ENCODE measurements at regions of chr1 and their contacts with region 1.

Region 1: GRCh38 chr1:171313835-171314320 is at the start of gene FMO4:
- DNase-seq: peak; percentile 100
- H3K4me3 Mint-ChIP-seq: peak within 1 kb of the TSS; percentile 64
- H3K27ac Mint-ChIP-seq: peak within 1 kb of the TSS; percentile 79
- H3K4me1 Mint-ChIP-seq: peaks cover 6% of the 10 kb centered on the region
- H3K27me3 Mint-ChIP-seq: no peaks in the 10 kb centered on the region
- CTCF ChIP-seq: peak; percentile 85
- total RNA-seq, gene FMO4: 0.63 and 1.5 TPM in 2 replicates

Region 2: DNA sequence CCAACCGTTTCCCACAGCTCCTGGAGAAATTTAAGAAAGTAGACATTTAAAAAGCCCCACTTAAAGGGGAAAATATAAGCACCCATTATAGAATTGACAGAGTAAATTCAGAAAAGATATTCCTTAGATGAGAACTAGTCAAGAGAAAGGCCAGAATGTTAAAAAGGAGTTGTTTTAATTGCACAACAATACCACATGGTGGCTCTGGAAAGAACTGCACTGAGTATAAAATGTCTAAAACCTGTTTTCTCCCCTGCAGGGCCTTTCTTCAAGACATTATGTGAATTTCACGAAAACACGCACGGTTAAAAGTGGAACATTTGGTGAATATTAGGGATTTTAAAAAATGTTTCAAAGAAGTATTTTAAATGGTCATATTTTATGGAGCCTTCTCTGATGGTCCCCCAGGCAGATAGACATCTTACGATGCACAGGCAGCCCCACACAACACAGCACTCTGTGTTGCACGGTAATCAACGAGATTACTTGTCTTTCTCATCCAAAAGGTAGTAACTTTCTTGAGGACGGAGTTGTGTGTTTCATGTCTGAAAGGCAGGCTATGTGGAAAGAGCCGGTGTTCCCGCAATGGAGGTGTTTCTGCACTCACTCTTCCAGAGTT is 548.1 kb before region 1 on chr1:
- CTCF ChIA-PET with region 1: no interaction called
- POLR2A ChIA-PET with region 1: no interaction called
- intact Hi-C with region 1: no loop called
- DNase-seq: peak; percentile 54
- H3K4me3 Mint-ChIP-seq: no peak overlapping the region
- H3K27ac Mint-ChIP-seq: no peak overlapping the region
- H3K4me1 Mint-ChIP-seq: no peaks in the 10 kb centered on the region
- H3K27me3 Mint-ChIP-seq: no peaks in the 10 kb centered on the region
- CTCF ChIP-seq: peak; percentile 74

Region 3: GRCh38 chr1:171090604-171091003 is 223.3 kb before region 1 on chr1 and contains the start of gene FMO3:
- CTCF ChIA-PET with region 1: interaction called, 12 read pairs
- POLR2A ChIA-PET with region 1: no interaction called
- intact Hi-C with region 1: no loop called
- DNase-seq: no peak
- H3K4me3 Mint-ChIP-seq: no peak within 1 kb of the TSS
- H3K27ac Mint-ChIP-seq: no peak within 1 kb of the TSS
- H3K4me1 Mint-ChIP-seq: no peaks in the 10 kb centered on the region
- H3K27me3 Mint-ChIP-seq: no peaks in the 10 kb centered on the region
- CTCF ChIP-seq: no peak
- total RNA-seq, gene FMO3: not detected in 2 replicates

Region 4: GRCh38 chr1:171220581-171221054 is 93.3 kb before region 1 on chr1:
- CTCF ChIA-PET with region 1: interaction called, 110 read pairs
- POLR2A ChIA-PET with region 1: interaction called, 4 read pairs
- intact Hi-C with region 1: no loop called
- DNase-seq: no peak
- H3K4me3 Mint-ChIP-seq: peak overlapping the region; percentile 70
- H3K27ac Mint-ChIP-seq: peak overlapping the region; percentile 98
- H3K4me1 Mint-ChIP-seq: peaks cover 61% of the 10 kb centered on the region
- H3K27me3 Mint-ChIP-seq: no peaks in the 10 kb centered on the region
- CTCF ChIP-seq: no peak

Region 5: GRCh38 chr1:171267391-171267790 is 46.5 kb before region 1 on chr1:
- CTCF ChIA-PET with region 1: interaction called, 19 read pairs
- POLR2A ChIA-PET with region 1: no interaction called
- intact Hi-C with region 1: no loop called
- DNase-seq: no peak
- H3K4me3 Mint-ChIP-seq: no peak overlapping the region
- H3K27ac Mint-ChIP-seq: no peak overlapping the region
- H3K4me1 Mint-ChIP-seq: peaks cover 8% of the 10 kb centered on the region
- H3K27me3 Mint-ChIP-seq: no peaks in the 10 kb centered on the region
- CTCF ChIP-seq: no peak

Region 6: DNA sequence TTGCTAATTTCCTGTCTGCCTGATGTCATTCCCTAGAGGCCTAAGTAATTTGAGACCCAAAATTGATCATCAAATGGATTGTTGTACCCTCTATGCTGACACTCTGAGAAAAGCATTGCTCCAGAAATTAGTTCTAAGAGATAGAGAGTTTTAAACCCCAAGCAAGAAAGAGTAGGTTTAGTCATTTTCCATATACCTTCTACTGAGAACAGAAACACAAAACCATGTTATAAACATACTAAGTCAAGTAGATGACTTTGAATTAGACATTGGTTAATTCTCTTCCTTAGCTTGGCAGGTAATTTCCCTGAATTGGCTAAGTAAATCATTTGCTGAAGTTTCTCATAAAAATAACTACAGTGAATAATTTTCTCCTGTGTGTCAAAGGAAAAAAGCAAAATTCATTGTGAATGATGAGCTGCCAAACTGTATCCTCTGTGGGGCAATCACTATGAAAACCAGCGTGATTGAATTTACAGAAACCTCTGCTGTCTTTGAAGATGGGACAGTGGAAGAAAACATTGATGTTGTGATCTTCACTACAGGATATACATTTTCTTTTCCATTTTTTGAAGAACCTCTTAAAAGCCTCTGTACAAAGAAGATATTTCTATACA is 20.3 kb after region 1 on chr1:
- CTCF ChIA-PET with region 1: interaction called, 31 read pairs
- POLR2A ChIA-PET with region 1: interaction called, 9 read pairs
- intact Hi-C with region 1: no loop called
- DNase-seq: no peak
- H3K4me3 Mint-ChIP-seq: no peak overlapping the region
- H3K27ac Mint-ChIP-seq: no peak overlapping the region
- H3K4me1 Mint-ChIP-seq: no peaks in the 10 kb centered on the region
- H3K27me3 Mint-ChIP-seq: no peaks in the 10 kb centered on the region
- CTCF ChIP-seq: no peak

Region 7: GRCh38 chr1:171485375-171486047 is 171.6 kb after region 1 on chr1 and contains the start of gene PRRC2C:
- CTCF ChIA-PET with region 1: interaction called, 14 read pairs
- POLR2A ChIA-PET with region 1: interaction called, 21 read pairs
- intact Hi-C with region 1: loop called (anchors 1 kb)
- DNase-seq: peak; percentile 100
- H3K4me3 Mint-ChIP-seq: peak within 1 kb of the TSS; percentile 80
- H3K27ac Mint-ChIP-seq: peak within 1 kb of the TSS; percentile 92
- H3K4me1 Mint-ChIP-seq: peaks cover 38% of the 10 kb centered on the region
- H3K27me3 Mint-ChIP-seq: no peaks in the 10 kb centered on the region
- CTCF ChIP-seq: peak; percentile 71
- total RNA-seq, gene PRRC2C: 296 and 298 TPM in 2 replicates

Measured in MCF 10A (cell line).